Calu3 (cell line): ENCODE measurements at regions of chr20 and their contacts with region 1.

Region 1: DNA sequence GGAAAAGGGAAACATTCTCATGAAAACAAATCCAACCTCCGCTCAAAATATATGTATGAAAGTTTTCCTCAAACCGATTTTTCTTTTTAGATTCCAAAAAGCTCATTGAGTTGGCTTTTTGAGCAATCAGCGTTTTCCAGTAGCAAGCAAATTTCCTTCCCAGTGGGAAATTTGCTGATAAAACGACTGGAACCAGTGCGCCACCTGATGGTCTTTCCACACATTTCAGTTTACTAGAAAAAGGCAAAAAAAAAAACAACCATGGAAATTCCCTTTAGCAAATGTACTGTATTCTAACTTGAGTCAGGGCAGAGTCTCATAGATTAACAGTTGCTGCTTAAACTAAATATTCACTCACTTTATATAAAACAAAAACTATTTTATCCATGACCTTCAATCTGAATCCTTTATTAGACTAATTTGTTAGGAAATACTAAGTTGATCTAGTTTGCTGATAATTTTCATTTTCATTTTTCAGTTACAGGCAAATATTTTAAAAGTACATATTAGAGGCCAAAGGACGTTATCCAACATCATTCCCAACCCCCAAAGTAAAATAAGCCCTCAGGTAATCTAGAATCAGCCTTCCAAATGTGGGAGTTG is 271.5 kb downstream of the FOXA2 start:
- DNase-seq: peak; percentile 2
- H3K4me3 Mint-ChIP-seq: no peak overlapping the region
- H3K27ac Mint-ChIP-seq: no peak overlapping the region
- H3K4me1 Mint-ChIP-seq: no peaks in the 10 kb centered on the region
- H3K27me3 Mint-ChIP-seq: peaks cover 3% of the 10 kb centered on the region
- CTCF ChIP-seq: no peak

Region 2: GRCh38 chr20:21719592-21720214 is 593.1 kb before region 1 on chr20:
- CTCF ChIA-PET with region 1: no interaction called
- intact Hi-C with region 1: loop called (anchors 5 kb)
- DNase-seq: peak; percentile 41
- H3K4me3 Mint-ChIP-seq: no peak overlapping the region
- H3K27ac Mint-ChIP-seq: no peak overlapping the region
- H3K4me1 Mint-ChIP-seq: no peaks in the 10 kb centered on the region
- H3K27me3 Mint-ChIP-seq: peaks cover 9% of the 10 kb centered on the region
- CTCF ChIP-seq: peak; percentile 22